Activated naive CD4-positive, alpha-beta T cell treated with anti-CD3 and anti-CD28 coated beads for 36 hours (primary cell): ENCODE measurements at regions of chr1 and their contacts with region 1.

Region 1: DNA sequence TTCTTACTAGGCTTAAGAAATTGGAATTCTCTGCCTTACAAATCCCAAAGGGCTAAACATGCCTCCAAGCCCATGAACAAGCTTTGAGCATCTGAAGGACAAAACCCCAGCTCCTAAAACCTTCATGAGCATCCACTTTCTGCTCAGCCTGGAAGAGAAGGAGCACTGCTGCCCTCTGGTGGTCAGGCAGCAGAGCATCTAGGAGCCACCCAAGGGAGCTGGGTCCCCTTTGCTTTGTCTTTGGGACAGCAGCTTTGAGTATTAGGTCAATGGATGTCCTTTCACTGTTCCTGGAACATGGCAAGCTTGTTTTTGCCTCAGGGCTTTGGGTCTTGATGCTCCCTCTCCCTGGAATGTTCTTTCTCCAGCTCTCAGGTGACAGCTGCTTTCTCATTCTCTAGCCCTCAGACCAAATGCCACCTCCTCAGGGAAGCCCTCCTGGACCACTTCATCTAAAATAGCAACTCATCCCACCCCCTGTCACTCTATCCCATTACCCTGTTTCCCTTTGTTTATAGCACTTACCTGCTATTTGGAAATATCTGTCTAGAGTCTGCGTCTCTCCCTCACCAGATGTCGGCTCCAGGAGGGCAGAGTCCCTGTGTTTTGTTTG is 25.7 kb downstream of the RAB7B start:
- DNase-seq: peak; percentile 88
- H3K4me3 Mint-ChIP-seq: no peak overlapping the region
- H3K27ac Mint-ChIP-seq: no peak overlapping the region
- H3K4me1 Mint-ChIP-seq: no peaks in the 10 kb centered on the region
- H3K27me3 Mint-ChIP-seq: no peaks in the 10 kb centered on the region

Region 2: DNA sequence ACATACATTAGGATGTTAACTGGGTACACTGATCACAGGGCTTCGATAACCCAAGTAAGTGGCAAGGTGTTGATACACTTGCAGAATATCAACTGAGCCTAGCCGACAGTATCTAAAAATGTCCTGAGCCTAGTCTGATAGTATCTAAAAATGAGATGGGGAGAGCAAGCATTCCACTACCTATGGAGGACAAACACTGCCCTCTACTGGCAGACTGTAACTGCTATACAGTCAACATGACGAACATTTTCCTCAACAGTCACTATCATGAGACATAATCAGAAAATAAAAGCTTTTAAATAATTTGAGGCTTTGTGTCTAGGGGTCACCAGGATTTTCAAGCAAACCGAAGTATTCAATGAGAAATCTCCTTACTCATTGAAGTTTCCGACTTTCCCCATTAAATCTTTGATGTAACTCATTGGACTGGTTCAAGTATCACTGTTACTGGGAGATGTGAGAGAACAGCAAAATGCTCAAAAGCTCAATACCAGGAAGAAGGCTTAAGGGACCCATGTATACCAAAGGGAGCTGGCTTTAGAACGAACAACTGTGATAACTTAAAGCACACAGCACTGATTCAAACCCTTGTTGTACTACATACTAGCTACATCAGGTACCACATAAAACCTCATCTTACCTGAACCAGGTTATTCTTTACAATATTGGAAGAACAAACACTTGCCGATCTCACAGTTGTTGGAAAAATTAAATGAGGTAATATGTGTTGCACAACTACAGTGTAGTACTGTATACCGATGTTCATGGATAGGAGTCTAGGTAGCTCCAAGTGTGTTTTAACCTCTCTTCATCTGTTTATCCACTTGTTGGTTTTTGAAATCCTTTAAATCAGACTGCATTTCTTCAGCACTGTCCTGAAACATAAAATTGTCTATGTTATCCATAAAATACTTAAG is 266.1 kb before region 1 on chr1:
- CTCF ChIA-PET with region 1: interaction called, 16 read pairs
- intact Hi-C with region 1: no loop called
- DNase-seq: peak; percentile 85
- H3K4me3 Mint-ChIP-seq: no peak overlapping the region
- H3K27ac Mint-ChIP-seq: peak overlapping the region; percentile 56
- H3K4me1 Mint-ChIP-seq: peaks cover 22% of the 10 kb centered on the region
- H3K27me3 Mint-ChIP-seq: no peaks in the 10 kb centered on the region

Region 3: GRCh38 chr1:205797168-205797567 is 180.3 kb before region 1 on chr1:
- CTCF ChIA-PET with region 1: interaction called, 82 read pairs
- intact Hi-C with region 1: no loop called
- DNase-seq: no peak
- H3K4me3 Mint-ChIP-seq: no peak overlapping the region
- H3K27ac Mint-ChIP-seq: no peak overlapping the region
- H3K4me1 Mint-ChIP-seq: no peaks in the 10 kb centered on the region
- H3K27me3 Mint-ChIP-seq: no peaks in the 10 kb centered on the region

Region 4: GRCh38 chr1:205950280-205950679 is 27.2 kb before region 1 on chr1:
- CTCF ChIA-PET with region 1: interaction called, 20 read pairs
- intact Hi-C with region 1: no loop called
- DNase-seq: no peak
- H3K4me3 Mint-ChIP-seq: no peak overlapping the region
- H3K27ac Mint-ChIP-seq: no peak overlapping the region
- H3K4me1 Mint-ChIP-seq: no peaks in the 10 kb centered on the region
- H3K27me3 Mint-ChIP-seq: peaks cover 3% of the 10 kb centered on the region

Region 5: DNA sequence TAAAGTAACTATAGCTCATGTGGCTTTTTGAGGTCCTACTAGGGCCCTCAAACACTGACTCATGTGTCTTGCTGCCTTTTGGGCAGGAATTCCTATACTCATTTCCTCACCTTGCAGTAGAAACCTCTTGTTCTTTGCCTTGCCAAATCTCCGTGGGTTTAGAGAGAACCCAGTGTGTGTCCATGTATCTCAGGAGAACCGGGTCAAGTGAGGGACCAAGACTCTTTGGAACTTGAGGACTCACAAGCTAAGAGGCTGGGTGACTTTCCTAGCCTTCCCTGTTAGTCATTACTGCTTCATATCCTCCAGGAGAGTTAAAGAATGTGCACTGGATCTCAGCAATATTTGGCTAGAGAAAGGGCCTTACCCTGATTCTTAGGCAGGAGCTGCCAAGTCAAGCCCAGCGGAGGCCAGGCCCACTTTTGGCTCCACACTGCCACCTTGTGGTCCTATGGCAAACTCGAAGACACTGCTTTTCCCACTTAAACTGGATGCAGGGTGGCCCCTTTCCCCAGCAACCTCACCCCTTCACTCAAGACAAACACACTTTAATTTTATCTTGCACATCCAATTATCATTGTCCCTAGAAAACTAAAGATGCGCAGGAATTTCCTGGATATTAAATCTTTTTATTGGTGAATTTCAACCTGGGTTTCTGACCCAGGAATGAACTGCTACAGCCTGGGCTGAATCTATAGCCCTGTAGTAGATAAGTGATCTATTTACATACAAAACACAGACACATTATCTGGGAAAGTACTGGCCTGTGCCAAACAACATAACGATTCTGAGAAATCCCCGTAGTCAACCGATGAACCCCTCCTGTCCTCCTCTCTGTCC is 129.0 kb after region 1 on chr1:
- CTCF ChIA-PET with region 1: interaction called, 51 read pairs
- intact Hi-C with region 1: no loop called
- DNase-seq: peak; percentile 92
- H3K4me3 Mint-ChIP-seq: no peak overlapping the region
- H3K27ac Mint-ChIP-seq: no peak overlapping the region
- H3K4me1 Mint-ChIP-seq: no peaks in the 10 kb centered on the region
- H3K27me3 Mint-ChIP-seq: peaks cover 2% of the 10 kb centered on the region

Region 6: GRCh38 chr1:206128196-206128595 is 150.7 kb after region 1 on chr1:
- CTCF ChIA-PET with region 1: no interaction called
- intact Hi-C with region 1: no loop called
- DNase-seq: no peak
- H3K4me3 Mint-ChIP-seq: no peak overlapping the region
- H3K27ac Mint-ChIP-seq: no peak overlapping the region
- H3K4me1 Mint-ChIP-seq: no peaks in the 10 kb centered on the region
- H3K27me3 Mint-ChIP-seq: peaks cover 16% of the 10 kb centered on the region

Region 7: DNA sequence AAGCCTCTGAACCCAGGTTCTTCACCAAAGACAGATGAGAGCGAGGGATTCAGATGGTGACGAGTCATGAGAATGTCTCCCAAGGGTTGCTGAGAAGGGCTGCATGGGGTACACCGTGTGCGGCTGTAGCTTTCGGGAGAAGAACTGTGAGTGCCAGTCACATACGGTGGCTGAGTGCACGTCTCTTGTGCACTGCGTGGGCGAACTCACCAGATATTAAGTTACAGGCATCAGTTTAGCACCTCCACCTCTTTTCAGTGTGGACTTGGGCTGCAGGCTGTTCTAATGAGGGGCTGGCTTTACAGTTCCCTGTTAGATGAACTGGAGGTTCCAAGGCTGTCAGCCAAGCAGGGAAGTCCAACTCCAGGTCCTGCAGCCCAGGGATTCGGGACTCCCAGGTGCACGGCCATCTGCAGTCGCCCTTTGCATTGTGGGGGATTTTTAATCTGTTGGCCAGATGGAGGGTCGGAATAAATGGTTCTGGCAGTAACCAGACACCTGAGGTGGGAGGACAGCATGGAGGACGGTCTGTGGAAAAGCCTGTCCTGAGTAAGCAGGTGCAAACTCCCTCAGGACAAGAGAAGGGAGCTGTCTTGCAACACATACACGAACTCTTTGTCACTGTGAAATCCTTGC is 166.1 kb after region 1 on chr1:
- CTCF ChIA-PET with region 1: no interaction called
- intact Hi-C with region 1: no loop called
- DNase-seq: no peak
- H3K4me3 Mint-ChIP-seq: no peak overlapping the region
- H3K27ac Mint-ChIP-seq: no peak overlapping the region
- H3K4me1 Mint-ChIP-seq: no peaks in the 10 kb centered on the region
- H3K27me3 Mint-ChIP-seq: peaks cover 2% of the 10 kb centered on the region

Region 8: GRCh38 chr1:207355060-207355459 is 1377.6 kb after region 1 on chr1:
- CTCF ChIA-PET with region 1: no interaction called
- intact Hi-C with region 1: no loop called
- DNase-seq: no peak
- H3K4me3 Mint-ChIP-seq: no peak overlapping the region
- H3K27ac Mint-ChIP-seq: no peak overlapping the region
- H3K4me1 Mint-ChIP-seq: peaks cover 55% of the 10 kb centered on the region
- H3K27me3 Mint-ChIP-seq: no peaks in the 10 kb centered on the region